Vagina (tissue), 2 donors: ENCODE measurements at regions of chr2 and their contacts with region 1.

Region 1: DNA sequence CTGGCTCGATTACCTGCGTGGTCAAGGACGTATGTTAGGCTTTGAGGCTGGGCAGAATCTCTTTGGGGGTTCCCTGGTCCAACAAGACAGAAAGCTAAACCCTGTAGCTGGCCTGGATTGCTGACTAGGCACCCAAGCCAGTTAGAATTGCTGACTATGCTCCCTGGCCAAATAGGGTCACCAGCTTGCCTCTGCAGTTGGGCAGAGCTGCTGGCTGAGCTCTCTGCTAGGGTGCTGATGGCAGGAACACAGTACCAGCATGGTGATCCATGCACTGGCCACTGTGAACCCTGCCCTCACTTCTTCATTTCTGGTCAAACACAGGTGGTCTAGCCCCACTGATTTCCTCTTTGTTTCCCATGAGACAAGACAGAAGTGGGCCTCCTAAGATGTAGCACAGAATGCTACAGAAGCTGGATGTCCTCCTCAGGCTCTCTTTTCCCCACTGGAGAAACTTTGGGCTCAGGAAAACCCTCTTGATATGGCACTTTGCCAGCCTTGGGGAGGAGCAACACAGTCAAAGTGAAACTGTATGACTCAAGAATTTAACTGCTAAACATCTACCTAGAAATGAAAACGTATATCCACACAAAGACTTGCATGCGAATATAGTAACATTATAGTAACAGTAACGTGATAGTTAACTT is 20.8 kb downstream of the SP140L start:
- DNase-seq: no peak
- H3K4me3 ChIP-seq: no peak overlapping the region
- H3K27ac ChIP-seq: no peak overlapping the region
- H3K4me1 ChIP-seq: no peaks in the 10 kb centered on the region
- H3K27me3 ChIP-seq: no peaks in the 10 kb centered on the region
- CTCF ChIP-seq: no peak
- POLR2A ChIP-seq: no peak

Region 2: GRCh38 chr2:230505162-230505561 is 157.4 kb after region 1 on chr2:
- intact Hi-C with region 1: loop called (anchors 5 kb)
- DNase-seq: no peak
- H3K4me3 ChIP-seq: no peak overlapping the region
- H3K27ac ChIP-seq: no peak overlapping the region
- H3K4me1 ChIP-seq: no peaks in the 10 kb centered on the region
- H3K27me3 ChIP-seq: no peaks in the 10 kb centered on the region
- CTCF ChIP-seq: no peak
- POLR2A ChIP-seq: no peak